MCF 10A (cell line): ENCODE measurements at regions of chr11 and their contacts with region 1.

Region 1: GRCh38 chr11:102306048-102306585 is 11.2 kb upstream of the BIRC3 start:
- DNase-seq: peak; percentile 96
- H3K4me3 Mint-ChIP-seq: peak overlapping the region; percentile 50
- H3K27ac Mint-ChIP-seq: peak overlapping the region; percentile 99
- H3K4me1 Mint-ChIP-seq: peaks cover 54% of the 10 kb centered on the region
- H3K27me3 Mint-ChIP-seq: no peaks in the 10 kb centered on the region
- CTCF ChIP-seq: peak; percentile 17

Region 2: GRCh38 chr11:102317099-102317767 is 11.1 kb after region 1 on chr11 and contains the start of gene BIRC3:
- CTCF ChIA-PET with region 1: interaction called, 15 read pairs
- POLR2A ChIA-PET with region 1: interaction called, 274 read pairs
- intact Hi-C with region 1: loop called (anchors 1 kb)
- DNase-seq: peak; percentile 96
- H3K4me3 Mint-ChIP-seq: peak within 1 kb of the TSS; percentile 85
- H3K27ac Mint-ChIP-seq: peak within 1 kb of the TSS; percentile 99
- H3K4me1 Mint-ChIP-seq: peaks cover 50% of the 10 kb centered on the region
- H3K27me3 Mint-ChIP-seq: no peaks in the 10 kb centered on the region
- CTCF ChIP-seq: no peak
- total RNA-seq, gene BIRC3: 91.6 and 124 TPM in 2 replicates

Region 3: DNA sequence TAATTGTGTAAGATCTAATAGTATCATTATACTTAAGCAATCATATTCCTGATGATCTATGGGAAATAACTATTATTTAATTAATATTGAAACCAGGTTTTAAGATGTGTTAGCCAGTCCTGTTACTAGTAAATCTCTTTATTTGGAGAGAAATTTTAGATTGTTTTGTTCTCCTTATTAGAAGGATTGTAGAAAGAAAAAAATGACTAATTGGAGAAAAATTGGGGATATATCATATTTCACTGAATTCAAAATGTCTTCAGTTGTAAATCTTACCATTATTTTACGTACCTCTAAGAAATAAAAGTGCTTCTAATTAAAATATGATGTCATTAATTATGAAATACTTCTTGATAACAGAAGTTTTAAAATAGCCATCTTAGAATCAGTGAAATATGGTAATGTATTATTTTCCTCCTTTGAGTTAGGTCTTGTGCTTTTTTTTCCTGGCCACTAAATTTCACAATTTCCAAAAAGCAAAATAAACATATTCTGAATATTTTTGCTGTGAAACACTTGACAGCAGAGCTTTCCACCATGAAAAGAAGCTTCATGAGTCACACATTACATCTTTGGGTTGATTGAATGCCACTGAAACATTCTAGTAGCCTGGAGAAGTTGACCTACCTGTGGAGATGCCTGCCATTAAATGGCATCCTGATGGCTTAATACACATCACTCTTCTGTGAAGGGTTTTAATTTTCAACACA is 17.6 kb after region 1 on chr11:
- CTCF ChIA-PET with region 1: interaction called, 15 read pairs
- POLR2A ChIA-PET with region 1: interaction called, 274 read pairs
- intact Hi-C with region 1: no loop called
- DNase-seq: peak; percentile 61
- H3K4me3 Mint-ChIP-seq: peak overlapping the region; percentile 33
- H3K27ac Mint-ChIP-seq: no peak overlapping the region
- H3K4me1 Mint-ChIP-seq: peaks cover 31% of the 10 kb centered on the region
- H3K27me3 Mint-ChIP-seq: no peaks in the 10 kb centered on the region
- CTCF ChIP-seq: no peak

Region 4: GRCh38 chr11:102346748-102347461 is 40.8 kb after region 1 on chr11 and contains the start of gene BIRC2:
- CTCF ChIA-PET with region 1: interaction called, 7 read pairs
- POLR2A ChIA-PET with region 1: interaction called, 19 read pairs
- intact Hi-C with region 1: loop called (anchors 5 kb)
- DNase-seq: peak; percentile 92
- H3K4me3 Mint-ChIP-seq: peak within 1 kb of the TSS; percentile 79
- H3K27ac Mint-ChIP-seq: peak within 1 kb of the TSS; percentile 97
- H3K4me1 Mint-ChIP-seq: peaks cover 15% of the 10 kb centered on the region
- H3K27me3 Mint-ChIP-seq: no peaks in the 10 kb centered on the region
- CTCF ChIP-seq: peak; percentile 67
- total RNA-seq, gene BIRC2: 46.2 and 50.0 TPM in 2 replicates